ENCODE measurements at regions of chr11 and their contacts with region 1.

Region 1: DNA sequence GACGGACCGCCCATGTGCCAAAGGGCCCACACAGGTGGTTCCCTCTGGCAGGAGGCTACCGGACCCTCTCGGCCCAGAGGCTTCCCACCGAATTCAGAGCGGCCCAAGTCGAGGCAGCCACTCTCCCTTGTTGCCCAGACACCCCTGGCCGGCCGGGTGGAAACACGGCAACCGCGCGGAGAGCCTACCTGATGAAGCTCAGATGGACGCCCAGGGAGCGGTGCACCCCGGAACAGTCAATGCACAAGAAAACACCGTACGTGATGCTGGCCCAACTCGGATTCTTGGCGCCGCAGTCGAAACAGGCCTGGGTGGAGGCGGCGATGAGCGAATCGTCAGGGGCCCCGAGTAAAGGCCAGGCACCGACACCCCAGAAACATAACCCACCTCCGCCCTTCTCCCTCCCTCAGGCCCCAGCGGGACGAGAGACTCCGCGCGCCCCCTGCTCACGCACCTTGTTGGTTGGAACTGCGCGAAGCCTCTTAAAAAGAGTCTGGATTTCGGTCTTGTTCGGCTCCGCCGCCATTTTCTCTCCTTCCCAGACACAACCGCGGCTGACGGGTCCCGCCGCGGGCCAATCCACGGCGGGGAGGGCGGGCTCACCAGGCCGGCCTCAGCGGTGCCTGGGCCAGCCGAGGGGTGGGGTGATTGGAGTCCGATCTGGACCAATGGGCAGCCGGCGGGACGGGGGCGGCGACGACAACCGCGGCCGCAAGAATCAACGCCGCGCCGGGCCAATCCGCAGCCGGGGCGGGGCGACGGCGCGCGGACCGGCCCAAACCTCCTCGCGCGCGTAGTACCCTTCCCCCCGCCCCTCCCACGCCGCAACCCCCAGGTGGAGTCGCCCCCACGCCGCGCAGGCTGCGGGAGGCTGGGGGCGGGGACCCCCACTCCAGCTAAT is at the start of gene ARFGAP2:
- DNase-seq: peak; percentile 97
- ATAC-seq: peak; percentile 94
- H3K4me3 Mint-ChIP-seq: peak within 1 kb of the TSS; percentile 94
- H3K27ac Mint-ChIP-seq: peak within 1 kb of the TSS; percentile 100
- H3K4me1 Mint-ChIP-seq: peaks cover 43% of the 10 kb centered on the region
- H3K27me3 Mint-ChIP-seq: no peaks in the 10 kb centered on the region
- CTCF ChIP-seq: no peak
- total RNA-seq, gene ARFGAP2: 70.1 to 71.7 TPM

Region 2: DNA sequence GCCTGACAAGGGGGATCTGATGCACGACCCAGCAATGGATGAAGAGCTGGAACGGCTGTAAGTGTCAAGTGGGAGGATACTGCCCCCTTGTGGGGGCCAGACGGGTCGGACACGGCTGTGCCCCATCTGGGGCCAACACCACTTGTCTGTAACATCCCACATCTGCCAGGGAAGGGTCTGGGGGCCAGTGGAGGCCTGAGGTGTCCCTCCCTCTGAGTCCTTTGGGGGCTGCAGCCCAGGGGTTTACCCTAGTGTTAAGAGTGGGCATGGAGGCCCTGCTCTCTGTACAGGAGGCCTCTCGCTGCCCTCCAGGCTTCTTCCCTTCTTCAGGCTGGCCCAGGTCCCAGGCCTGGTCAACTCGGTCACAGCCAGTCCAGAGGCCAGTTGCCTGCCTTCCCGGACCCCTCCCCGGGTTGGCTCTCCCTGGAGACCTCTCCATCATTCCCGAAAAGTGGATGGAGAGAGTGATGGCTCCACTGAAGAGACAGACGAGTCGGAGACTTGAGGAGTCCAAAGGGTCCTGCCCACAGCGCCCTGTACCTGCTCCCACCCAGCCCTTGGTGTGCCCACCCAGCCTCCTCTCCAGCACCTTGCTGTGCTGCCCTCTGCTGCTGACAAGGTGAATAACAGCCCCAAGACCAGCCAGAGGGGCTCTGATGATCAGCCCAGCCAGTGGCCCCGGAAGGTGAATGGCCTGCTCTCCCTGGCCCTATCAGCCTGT is 15.3 kb before region 1 on chr11:
- CTCF ChIA-PET with region 1: interaction called, 21 read pairs
- POLR2A ChIA-PET with region 1: interaction called, 20 read pairs
- intact Hi-C with region 1: no loop called
- DNase-seq: peak; percentile 74
- ATAC-seq: peak; percentile 86
- H3K4me3 Mint-ChIP-seq: no peak overlapping the region
- H3K27ac Mint-ChIP-seq: no peak overlapping the region
- H3K4me1 Mint-ChIP-seq: no peaks in the 10 kb centered on the region
- H3K27me3 Mint-ChIP-seq: no peaks in the 10 kb centered on the region
- CTCF ChIP-seq: peak; percentile 81

Region 3: DNA sequence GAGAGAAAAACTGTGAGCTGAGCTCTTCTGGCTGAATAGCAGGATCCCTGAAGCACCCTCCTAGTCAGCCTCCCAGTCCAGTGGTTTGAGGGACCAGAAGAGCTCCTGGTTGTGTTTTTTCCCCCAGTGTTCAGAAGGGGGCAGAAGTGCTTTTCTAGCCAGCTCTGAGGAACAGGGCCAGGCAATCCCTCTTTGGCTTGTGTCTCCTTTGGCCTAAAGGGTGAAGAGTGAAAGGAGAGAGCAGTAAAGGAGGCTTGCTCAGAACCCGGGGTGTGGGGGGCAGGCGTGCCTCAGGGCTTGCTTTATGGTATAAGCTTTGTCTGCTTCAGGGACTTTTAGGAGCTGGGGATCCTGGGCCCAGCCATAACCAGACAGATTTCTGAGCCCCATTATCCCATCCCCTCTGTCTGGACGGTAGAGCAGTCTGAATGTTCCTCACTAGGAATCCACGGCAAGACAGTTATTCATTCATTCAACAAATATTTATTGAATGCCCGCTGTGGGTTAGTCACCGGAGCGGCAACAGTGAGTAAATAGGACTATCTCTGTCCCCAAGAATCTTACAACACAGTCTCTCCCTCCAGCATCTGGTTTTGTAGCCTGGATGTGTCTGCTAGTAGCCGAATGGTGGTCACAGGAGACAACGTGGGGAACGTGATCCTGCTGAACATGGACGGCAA is 57.6 kb after region 1 on chr11:
- CTCF ChIA-PET with region 1: interaction called, 18 read pairs
- POLR2A ChIA-PET with region 1: no interaction called
- intact Hi-C with region 1: no loop called
- DNase-seq: peak; percentile 19
- ATAC-seq: peak; percentile 42
- H3K4me3 Mint-ChIP-seq: no peak overlapping the region
- H3K27ac Mint-ChIP-seq: peak overlapping the region; percentile 56
- H3K4me1 Mint-ChIP-seq: peaks cover 22% of the 10 kb centered on the region
- H3K27me3 Mint-ChIP-seq: no peaks in the 10 kb centered on the region
- CTCF ChIP-seq: no peak

Measured in activated CD8-positive, alpha-beta T cell treated with anti-CD3 and anti-CD28 coated beads for 36 hours (primary cell).